AG04450 (cell line): ENCODE measurements at regions of chr5 and their contacts with region 1.

Region 1: DNA sequence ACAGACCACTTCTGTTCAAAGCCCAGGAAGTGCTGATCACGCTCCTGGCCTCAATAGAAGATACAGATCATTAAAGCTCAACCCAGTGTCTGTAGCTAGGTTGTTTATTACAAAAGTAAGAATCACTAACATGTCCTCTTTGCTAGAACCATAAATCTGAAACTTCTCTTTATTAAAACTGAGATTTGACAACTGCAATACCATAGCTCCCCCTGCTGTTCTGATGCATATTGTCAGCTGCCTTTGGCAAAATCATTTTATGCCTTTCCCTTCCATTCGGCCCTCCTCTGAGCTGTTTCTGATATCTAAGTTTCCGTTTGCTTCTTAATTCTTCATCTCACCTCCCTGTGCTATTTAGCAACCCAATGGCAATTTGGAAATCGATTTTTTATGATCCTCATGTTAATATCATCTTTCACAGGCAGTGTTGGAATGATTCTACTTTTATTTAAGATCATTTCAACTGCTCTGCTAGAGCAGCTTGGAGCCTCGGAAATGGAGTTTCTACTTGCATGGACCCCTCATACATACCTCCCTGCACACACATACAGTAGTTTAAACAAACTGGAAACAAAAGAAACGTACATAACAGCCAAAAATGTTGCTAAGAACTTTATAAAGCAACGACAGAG is 998.8 kb downstream of the MAT2B start:
- DNase-seq: peak; percentile 47
- H3K4me3 ChIP-seq: no peak overlapping the region
- H3K27ac ChIP-seq: no peak overlapping the region
- H3K27me3 ChIP-seq: no peaks in the 10 kb centered on the region
- CTCF ChIP-seq: peak; percentile 86

Region 2: DNA sequence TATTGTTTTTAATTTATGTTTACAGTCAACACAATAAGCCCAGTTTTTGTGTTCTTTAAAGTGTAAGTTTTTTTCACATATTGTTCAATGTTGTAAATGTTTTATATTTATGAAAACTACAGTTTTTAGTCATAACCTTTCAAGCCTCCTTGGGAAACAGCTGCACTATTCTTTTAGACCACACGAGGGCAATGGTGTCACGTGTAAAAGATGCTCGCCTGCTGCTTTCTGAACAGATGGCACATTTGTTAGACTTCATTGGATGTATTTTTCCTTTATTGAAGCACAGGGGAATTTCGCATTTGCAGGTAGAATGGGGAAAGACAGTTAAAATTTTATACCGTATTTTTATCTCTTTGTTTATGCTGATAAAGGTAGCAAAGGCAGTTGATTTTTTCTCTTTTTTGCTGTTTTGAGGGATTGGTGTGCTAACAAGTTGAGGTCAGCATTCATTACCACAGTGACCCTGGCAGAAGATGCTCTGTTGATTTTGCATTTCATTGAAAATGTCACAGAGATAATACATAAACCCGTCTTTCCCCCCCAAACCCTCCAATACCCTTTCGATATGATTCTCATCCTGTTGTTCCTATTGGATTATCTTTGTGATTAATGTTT is 939.8 kb before region 1 on chr5:
- CTCF ChIA-PET with region 1: interaction called, 142 read pairs
- POLR2A ChIA-PET with region 1: no interaction called
- DNase-seq: peak; percentile 24
- H3K4me3 ChIP-seq: no peak overlapping the region
- H3K27ac ChIP-seq: no peak overlapping the region
- H3K27me3 ChIP-seq: no peaks in the 10 kb centered on the region
- CTCF ChIP-seq: peak; percentile 88

Region 3: GRCh38 chr5:163695830-163696578 is 808.3 kb before region 1 on chr5:
- CTCF ChIA-PET with region 1: interaction called, 95 read pairs
- POLR2A ChIA-PET with region 1: no interaction called
- DNase-seq: peak; percentile 69
- H3K4me3 ChIP-seq: no peak overlapping the region
- H3K27ac ChIP-seq: no peak overlapping the region
- H3K27me3 ChIP-seq: no peaks in the 10 kb centered on the region
- CTCF ChIP-seq: peak; percentile 85

Region 4: DNA sequence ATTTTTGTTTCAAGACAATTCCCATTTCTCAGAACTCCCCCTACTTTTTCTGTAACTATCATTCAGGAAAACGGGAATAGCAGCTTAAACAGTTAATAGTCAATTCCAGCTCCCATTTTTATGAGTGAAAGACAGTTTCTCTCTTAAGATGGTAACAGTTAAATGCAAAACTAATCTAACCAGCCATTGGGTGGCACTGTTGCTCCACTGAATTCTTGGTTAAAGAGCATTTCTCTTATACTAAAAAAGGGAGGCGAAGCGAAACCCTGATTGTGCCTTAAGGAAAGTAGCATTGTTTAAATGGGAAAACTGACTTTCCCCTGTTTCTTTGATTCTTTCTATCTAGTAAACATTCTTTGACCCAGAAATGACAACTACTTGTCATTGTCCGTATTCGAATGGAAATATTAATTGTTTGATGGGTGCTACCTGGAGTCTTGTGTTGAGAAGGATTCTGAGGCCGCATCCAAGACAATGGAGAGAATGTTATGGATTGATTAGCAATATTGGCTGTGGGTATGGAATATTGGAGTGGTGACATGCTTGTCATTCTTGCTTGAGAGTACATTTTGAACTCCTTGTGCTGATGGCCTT is 491.1 kb before region 1 on chr5:
- CTCF ChIA-PET with region 1: interaction called, 155 read pairs
- POLR2A ChIA-PET with region 1: no interaction called
- DNase-seq: peak; percentile 57
- H3K4me3 ChIP-seq: no peak overlapping the region
- H3K27ac ChIP-seq: no peak overlapping the region
- H3K27me3 ChIP-seq: no peaks in the 10 kb centered on the region
- CTCF ChIP-seq: peak; percentile 70

Region 5: GRCh38 chr5:164027738-164028137 is 476.5 kb before region 1 on chr5:
- CTCF ChIA-PET with region 1: interaction called, 18 read pairs
- POLR2A ChIA-PET with region 1: no interaction called
- DNase-seq: no peak
- H3K4me3 ChIP-seq: no peak overlapping the region
- H3K27ac ChIP-seq: no peak overlapping the region
- H3K27me3 ChIP-seq: no peaks in the 10 kb centered on the region
- CTCF ChIP-seq: no peak

Region 6: GRCh38 chr5:164518052-164518740 is 13.9 kb after region 1 on chr5:
- CTCF ChIA-PET with region 1: interaction called, 16 read pairs
- POLR2A ChIA-PET with region 1: no interaction called
- DNase-seq: no peak
- H3K4me3 ChIP-seq: no peak overlapping the region
- H3K27ac ChIP-seq: no peak overlapping the region
- H3K27me3 ChIP-seq: no peaks in the 10 kb centered on the region
- CTCF ChIP-seq: no peak

Region 7: GRCh38 chr5:164980480-164980879 is 476.2 kb after region 1 on chr5:
- CTCF ChIA-PET with region 1: no interaction called
- POLR2A ChIA-PET with region 1: no interaction called
- DNase-seq: no peak
- H3K4me3 ChIP-seq: no peak overlapping the region
- H3K27ac ChIP-seq: no peak overlapping the region
- H3K27me3 ChIP-seq: no peaks in the 10 kb centered on the region
- CTCF ChIP-seq: no peak